Gastrocnemius medialis (tissue), 4 donors: ENCODE measurements at regions of chr5 and their contacts with region 1.

Region 1: DNA sequence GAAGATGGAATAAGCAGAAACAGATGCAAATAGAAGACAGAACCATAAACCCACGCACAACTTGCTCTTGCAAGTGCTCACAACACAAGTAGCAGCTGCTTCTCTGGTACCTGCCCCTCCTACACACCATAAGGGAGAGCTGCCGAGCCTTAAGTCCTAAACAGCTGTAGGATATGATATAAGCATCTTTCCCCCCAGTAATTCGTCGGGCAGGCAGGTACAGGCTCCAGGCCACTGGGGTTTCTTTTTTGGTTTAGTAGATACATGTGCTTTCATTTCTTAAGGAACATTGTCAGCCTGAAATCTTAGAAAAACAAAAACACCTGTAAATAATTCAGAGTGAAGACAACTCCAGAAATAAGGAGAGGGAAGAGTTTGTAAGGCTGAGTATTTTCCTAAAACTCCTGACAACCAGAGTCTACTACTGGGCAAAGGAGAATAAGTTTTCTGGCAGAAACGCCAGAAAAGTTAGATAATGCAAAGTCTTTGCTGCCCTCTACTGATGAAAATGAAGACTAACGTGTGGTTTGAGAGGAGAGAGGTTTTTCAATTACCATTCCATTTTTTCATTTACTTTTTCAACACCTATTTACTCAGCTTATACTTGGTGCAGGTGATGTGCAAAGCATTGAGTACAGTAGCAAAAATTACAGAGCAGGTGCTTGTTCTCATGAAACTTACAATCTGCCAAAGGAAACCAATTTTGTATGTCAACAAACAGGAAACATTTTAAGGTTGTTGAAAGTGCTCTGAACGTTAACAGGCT is 20.1 kb upstream of the TCERG1 start:
- DNase-seq: no peak
- ATAC-seq: peak in 1 of 2 donors; percentile 74
- H3K4me3 ChIP-seq: no peak overlapping the region
- H3K27ac ChIP-seq: no peak overlapping the region
- H3K4me1 ChIP-seq: no peaks in the 10 kb centered on the region
- H3K27me3 ChIP-seq: no peaks in the 10 kb centered on the region
- CTCF ChIP-seq: peak in 4 of 5 experiments; percentile 54 to 69 (median 62)
- POLR2A ChIP-seq: no peak

Region 2: GRCh38 chr5:146291421-146292074 is 135.5 kb before region 1 on chr5:
- in situ Hi-C with region 1: loop called in 1 of 4 experiments (anchors 5 kb)
- intact Hi-C with region 1: loop called (anchors 1 kb)
- DNase-seq: no peak
- ATAC-seq: peak; percentile 61 to 70
- H3K4me3 ChIP-seq: no peak overlapping the region
- H3K27ac ChIP-seq: no peak overlapping the region
- H3K4me1 ChIP-seq: no peaks in the 10 kb centered on the region
- H3K27me3 ChIP-seq: no peaks in the 10 kb centered on the region
- CTCF ChIP-seq: peak; percentile 19 to 64 (median 44)
- POLR2A ChIP-seq: no peak

Region 3: GRCh38 chr5:146378986-146379385 is 48.0 kb before region 1 on chr5:
- in situ Hi-C with region 1: no loop called
- intact Hi-C with region 1: no loop called
- DNase-seq: no peak
- ATAC-seq: no peak
- H3K4me3 ChIP-seq: no peak overlapping the region
- H3K27ac ChIP-seq: no peak overlapping the region
- H3K4me1 ChIP-seq: no peaks in the 10 kb centered on the region
- H3K27me3 ChIP-seq: peaks cover 0 to 5% (median 4%) of the 10 kb centered on the region in 3 donors
- CTCF ChIP-seq: no peak
- POLR2A ChIP-seq: no peak

Region 4: DNA sequence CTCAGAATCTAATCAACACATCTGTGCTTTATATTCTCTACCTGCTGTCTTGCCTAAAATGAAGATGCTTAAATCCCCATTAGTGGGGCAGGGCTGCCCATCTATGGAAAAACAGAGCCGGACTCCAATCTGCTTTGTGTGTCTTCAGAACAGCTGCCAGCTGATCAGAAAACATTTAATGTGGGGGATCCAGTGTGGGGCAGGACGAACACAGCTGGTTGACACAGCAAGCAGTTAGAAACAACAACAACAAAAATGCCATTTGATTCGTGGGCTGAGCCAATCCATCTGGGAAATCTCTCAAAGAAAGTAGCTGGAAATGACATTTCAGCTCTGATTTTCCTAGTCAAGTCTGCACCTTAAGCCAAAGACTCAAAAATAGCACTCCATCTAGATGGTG is 351.8 kb after region 1 on chr5:
- in situ Hi-C with region 1: no loop called
- intact Hi-C with region 1: no loop called
- DNase-seq: no peak
- ATAC-seq: no peak
- H3K4me3 ChIP-seq: no peak overlapping the region
- H3K27ac ChIP-seq: no peak overlapping the region
- H3K4me1 ChIP-seq: no peaks in the 10 kb centered on the region
- H3K27me3 ChIP-seq: no peaks in the 10 kb centered on the region
- CTCF ChIP-seq: no peak
- POLR2A ChIP-seq: no peak